BJ (cell line): ENCODE measurements at regions of chr17 and their contacts with region 1.

Region 1: DNA sequence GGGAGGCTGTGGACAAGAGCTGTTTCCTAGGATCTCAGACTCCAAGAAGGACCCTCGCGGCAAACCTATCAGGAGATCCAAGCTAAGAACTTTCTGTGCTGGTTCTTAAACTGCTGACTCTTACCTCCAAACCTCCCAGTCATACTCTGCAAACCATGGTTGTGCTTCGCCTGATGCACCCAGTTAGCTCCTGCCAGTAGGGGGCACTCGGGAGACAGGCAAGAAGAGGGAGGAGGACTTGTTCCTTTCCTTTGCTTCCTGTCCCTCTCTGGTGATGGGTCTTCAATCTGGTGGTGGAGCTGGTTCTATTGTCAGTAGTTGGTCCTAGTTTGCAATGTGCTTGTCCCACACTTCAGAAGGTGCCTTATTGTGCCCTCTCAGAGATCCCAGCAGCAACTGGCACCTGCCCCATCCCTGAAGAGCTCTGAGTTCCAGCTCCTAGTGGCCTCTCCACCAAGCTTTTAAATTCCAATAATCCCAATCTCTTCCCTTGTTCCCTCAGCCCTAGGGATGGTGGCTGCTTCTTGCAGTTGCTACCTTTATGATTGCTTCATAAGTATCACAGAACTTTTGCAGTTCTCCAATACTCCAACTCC is 113.5 kb upstream of the RPL38 start:
- DNase-seq: no peak
- H3K4me3 ChIP-seq: no peak overlapping the region
- H3K27me3 ChIP-seq: no peaks in the 10 kb centered on the region
- CTCF ChIP-seq: peak; percentile 58

Region 2: GRCh38 chr17:74176546-74177001 is 86.6 kb after region 1 on chr17:
- CTCF ChIA-PET with region 1: interaction called, 14 read pairs
- POLR2A ChIA-PET with region 1: no interaction called
- DNase-seq: no peak
- H3K4me3 ChIP-seq: no peak overlapping the region
- H3K27me3 ChIP-seq: no peaks in the 10 kb centered on the region; the same call in 1 of the 2 replicates
- CTCF ChIP-seq: peak; percentile 89